Mammary epithelial cell (primary cell): ENCODE measurements at regions of chr1 and their contacts with region 1.

Region 1: GRCh38 chr1:904310-904950 is 19.3 kb upstream of the SAMD11 start:
- DNase-seq: peak; percentile 76
- H3K4me3 ChIP-seq: peak overlapping the region; percentile 34 to 52 (median 47)
- H3K27ac ChIP-seq: no peak overlapping the region
- H3K4me1 ChIP-seq: peaks cover 11% of the 10 kb centered on the region
- H3K27me3 ChIP-seq: peaks cover 3% of the 10 kb centered on the region
- CTCF ChIP-seq: peak; percentile 66 to 75

Region 2: GRCh38 chr1:869499-870244 is 34.8 kb before region 1 on chr1:
- CTCF ChIA-PET with region 1: no interaction called
- dilution Hi-C with region 1: no loop called
- in situ Hi-C with region 1: no loop called
- intact Hi-C with region 1: no loop called
- DNase-seq: peak; percentile 25
- H3K4me3 ChIP-seq: no peak overlapping the region
- H3K27ac ChIP-seq: no peak overlapping the region
- H3K4me1 ChIP-seq: no peaks in the 10 kb centered on the region
- H3K27me3 ChIP-seq: peaks cover 2% of the 10 kb centered on the region
- CTCF ChIP-seq: peak; percentile 40 to 68

Region 3: DNA sequence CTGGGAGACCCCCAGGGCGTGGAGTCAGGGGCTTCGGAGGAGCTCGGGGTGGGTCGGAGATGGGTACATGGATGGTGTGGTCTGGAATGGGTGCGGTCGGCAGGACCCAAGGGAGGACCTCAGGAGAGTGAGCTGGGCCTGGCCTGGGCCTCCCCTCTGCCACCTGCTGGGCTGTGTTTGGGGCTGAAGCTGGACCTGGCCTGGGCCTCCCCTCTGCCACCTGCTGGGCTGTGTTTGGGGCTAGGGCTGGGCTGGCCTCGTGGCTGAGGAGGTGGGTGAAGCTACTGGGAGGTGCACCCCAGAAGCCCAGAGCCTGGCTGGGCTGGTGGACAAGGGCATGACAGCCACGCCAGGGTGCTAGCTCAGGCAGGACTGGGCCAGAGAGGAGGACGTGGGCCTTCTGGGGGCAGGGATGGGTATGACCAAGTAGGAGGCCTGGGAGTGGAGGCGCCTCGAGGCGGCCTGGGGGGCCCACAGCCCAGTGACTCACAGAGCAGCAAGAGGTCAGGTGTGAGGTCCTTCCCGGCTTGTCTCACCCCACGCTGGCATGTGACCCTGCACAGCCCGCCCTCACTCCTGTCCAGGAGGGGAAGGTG is 33.8 kb after region 1 on chr1:
- CTCF ChIA-PET with region 1: no interaction called
- dilution Hi-C with region 1: no loop called
- in situ Hi-C with region 1: no loop called
- intact Hi-C with region 1: loop called (anchors 1 kb)
- DNase-seq: no peak
- H3K4me3 ChIP-seq: no peak overlapping the region
- H3K27ac ChIP-seq: no peak overlapping the region
- H3K4me1 ChIP-seq: peaks cover 22% of the 10 kb centered on the region
- H3K27me3 ChIP-seq: peaks cover 46% of the 10 kb centered on the region
- CTCF ChIP-seq: peak; percentile 14 to 64

Region 4: GRCh38 chr1:975896-976683 is 71.7 kb after region 1 on chr1:
- CTCF ChIA-PET with region 1: no interaction called
- dilution Hi-C with region 1: no loop called
- in situ Hi-C with region 1: no loop called
- intact Hi-C with region 1: loop called (anchors 1 kb)
- DNase-seq: peak; percentile 69
- H3K4me3 ChIP-seq: peak overlapping the region; percentile 27 to 44 (median 33)
- H3K27ac ChIP-seq: peak overlapping the region; percentile 3
- H3K4me1 ChIP-seq: peaks cover 11% of the 10 kb centered on the region
- H3K27me3 ChIP-seq: no peaks in the 10 kb centered on the region
- CTCF ChIP-seq: peak; percentile 24 to 73